Dorsolateral prefrontal cortex (tissue), 120 donors: ENCODE measurements at regions of chr9 and their contacts with region 1.

Region 1: GRCh38 chr9:137762414-137763061 is 115.0 kb upstream of the CACNA1B start:
- DNase-seq: no peak
- H3K4me3 ChIP-seq: no peak overlapping the region
- H3K27ac ChIP-seq: peak overlapping the region in 17 of 59 donors; percentile 16 to 89 (median 48)
- H3K27me3 ChIP-seq: no peaks in the 10 kb centered on the region
- CTCF ChIP-seq: no peak

Region 2: GRCh38 chr9:137672907-137673791 is 89.4 kb before region 1 on chr9:
- intact Hi-C with region 1: loop called (anchors 5 to 10 kb)
- DNase-seq: peak in 2 of 10 donors; percentile 56 to 65
- H3K4me3 ChIP-seq: no peak overlapping the region
- H3K27ac ChIP-seq: peak overlapping the region in 32 of 59 donors; percentile 2 to 81 (median 39)
- H3K27me3 ChIP-seq: no peaks in the 10 kb centered on the region
- CTCF ChIP-seq: peak; percentile 82 to 97 (median 91)

Region 3: DNA sequence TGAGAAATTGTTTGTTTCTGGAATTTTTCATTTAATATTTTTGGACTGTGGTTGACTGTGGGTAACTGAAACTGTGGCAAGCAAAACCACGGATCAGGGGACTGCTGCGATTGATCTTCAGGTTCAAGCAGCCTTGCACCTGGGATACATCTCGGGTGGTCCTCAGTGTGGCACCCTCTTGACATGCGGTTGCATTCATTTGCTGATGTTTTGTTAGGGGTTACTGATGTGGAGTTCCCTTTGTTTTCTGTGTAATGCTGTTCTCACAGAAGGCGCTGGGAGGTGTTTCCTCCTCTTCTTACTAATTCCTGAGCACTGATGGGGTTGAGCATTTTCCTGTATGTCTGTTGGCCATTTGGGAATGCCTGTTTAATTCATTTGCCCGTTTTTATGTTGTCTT is 83.3 kb before region 1 on chr9:
- intact Hi-C with region 1: loop called (anchors 5 to 10 kb)
- DNase-seq: no peak
- H3K4me3 ChIP-seq: no peak overlapping the region
- H3K27ac ChIP-seq: no peak overlapping the region
- H3K27me3 ChIP-seq: no peaks in the 10 kb centered on the region
- CTCF ChIP-seq: no peak

Region 4: DNA sequence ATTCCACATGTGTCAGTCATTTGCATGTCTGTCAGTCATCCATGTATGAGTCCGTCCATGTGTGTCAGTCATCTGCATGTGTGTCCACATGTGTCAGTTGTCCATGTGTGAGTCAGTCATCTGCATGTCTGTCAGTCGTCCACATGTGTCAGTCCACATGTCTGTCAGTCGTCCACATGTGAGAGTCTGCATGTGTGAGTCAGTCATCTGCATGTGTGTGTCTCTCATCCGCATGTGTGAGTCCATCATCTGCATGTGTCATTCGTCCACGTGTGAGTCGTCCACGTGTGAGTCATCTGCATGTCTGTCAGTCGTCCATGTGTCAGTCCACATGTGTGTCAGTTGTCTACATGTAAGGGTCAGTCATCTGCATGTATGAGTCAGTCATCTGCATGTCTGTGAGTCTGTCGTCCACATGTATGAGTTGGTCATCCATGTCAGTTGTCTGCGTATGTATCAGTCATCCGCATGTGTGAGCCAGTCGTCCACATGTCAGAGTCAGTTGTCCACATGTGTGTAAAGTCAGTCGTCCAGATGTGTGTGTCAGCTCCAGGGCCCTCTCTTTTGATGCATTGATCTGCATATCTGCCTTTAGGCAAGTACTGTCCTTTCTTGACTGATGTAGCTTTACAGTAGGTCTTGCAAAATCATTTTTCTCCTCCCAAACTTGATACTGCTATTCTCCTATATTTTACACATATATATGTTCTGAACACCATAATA is 42.5 kb after region 1 on chr9:
- intact Hi-C with region 1: no loop called
- DNase-seq: no peak
- H3K4me3 ChIP-seq: no peak overlapping the region
- H3K27ac ChIP-seq: no peak overlapping the region
- H3K27me3 ChIP-seq: no peaks in the 10 kb centered on the region
- CTCF ChIP-seq: no peak